ENCODE measurements at regions of chr13 and their contacts with region 1.

Region 1: GRCh38 chr13:112942689-112943308 is 26.2 kb upstream of the MCF2L start:
- DNase-seq: peak; percentile 94
- H3K4me3 Mint-ChIP-seq: peak overlapping the region; percentile 73
- H3K27ac Mint-ChIP-seq: no peak overlapping the region
- H3K4me1 Mint-ChIP-seq: peaks cover 4% of the 10 kb centered on the region
- H3K27me3 Mint-ChIP-seq: peaks cover 34% of the 10 kb centered on the region

Region 2: DNA sequence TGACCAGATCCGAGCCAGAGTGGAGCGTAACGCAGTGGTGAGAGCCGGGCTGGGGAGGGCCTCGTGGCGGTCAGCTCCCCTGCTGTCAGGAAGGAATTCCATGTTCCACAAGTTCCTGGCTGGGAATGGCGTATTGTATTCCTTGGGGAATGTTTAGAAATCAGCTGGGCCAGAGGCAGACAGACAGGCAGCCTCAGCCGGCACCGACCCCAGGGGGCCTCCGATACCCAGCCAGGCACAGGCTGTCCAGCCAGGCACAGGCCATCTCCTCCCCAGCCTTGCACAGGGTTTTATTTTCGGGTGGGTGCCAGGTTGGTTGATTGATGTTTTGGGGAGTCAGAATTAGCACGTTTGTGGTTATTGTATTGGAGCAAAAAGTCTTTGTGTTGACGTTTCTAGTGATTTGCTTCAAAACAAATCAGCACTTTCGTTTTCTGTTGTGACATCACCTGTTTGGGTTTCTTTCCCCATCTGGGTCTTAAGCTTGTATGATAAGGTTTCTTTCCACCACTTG is 100.4 kb before region 1 on chr13:
- CTCF ChIA-PET with region 1: no interaction called
- POLR2A ChIA-PET with region 1: no interaction called
- DNase-seq: no peak
- H3K4me3 Mint-ChIP-seq: no peak overlapping the region
- H3K27ac Mint-ChIP-seq: no peak overlapping the region
- H3K4me1 Mint-ChIP-seq: peaks cover 5% of the 10 kb centered on the region
- H3K27me3 Mint-ChIP-seq: no peaks in the 10 kb centered on the region

Region 3: DNA sequence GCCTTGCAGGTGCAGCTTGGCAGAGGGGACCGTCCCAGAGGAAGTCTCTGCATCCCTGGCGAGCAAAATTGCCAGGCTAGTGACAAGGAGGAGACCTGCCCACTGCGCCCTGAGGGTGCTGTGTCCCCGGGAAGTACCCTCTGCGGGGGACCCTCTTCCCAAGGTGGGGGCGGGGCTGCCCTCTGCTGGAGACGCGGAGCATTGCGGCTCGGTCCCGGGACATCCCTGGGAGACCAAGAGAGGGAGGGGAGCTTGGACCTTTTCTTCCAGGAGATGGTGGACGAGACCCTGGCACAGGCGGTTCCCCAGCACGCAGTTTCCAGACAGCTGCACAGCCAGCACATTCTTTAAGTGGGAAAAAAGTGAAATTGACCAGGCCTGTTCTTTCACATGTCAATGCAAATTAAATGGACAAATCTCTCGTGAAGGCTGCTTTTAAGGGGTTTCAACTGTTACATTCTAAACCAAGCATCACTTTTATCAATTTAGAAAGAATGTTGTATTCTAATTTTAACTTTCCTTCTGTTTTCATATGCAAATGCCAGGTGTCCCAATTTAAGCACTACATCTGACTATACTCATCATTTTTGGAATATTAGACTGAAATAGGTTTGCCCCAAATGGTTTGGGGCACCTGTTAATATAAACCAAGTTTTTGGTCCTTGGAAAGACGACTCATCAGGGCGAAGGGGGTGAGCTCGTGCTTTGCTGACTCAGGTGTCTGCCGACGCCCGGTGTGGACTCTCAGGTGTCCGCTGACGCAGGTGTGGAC is 86.9 kb after region 1 on chr13:
- CTCF ChIA-PET with region 1: interaction called, 15 read pairs
- POLR2A ChIA-PET with region 1: no interaction called
- DNase-seq: peak; percentile 40
- H3K4me3 Mint-ChIP-seq: no peak overlapping the region
- H3K27ac Mint-ChIP-seq: no peak overlapping the region
- H3K4me1 Mint-ChIP-seq: no peaks in the 10 kb centered on the region
- H3K27me3 Mint-ChIP-seq: no peaks in the 10 kb centered on the region

Region 4: GRCh38 chr13:113238536-113238935 is 295.7 kb after region 1 on chr13:
- CTCF ChIA-PET with region 1: interaction called, 11 read pairs
- POLR2A ChIA-PET with region 1: interaction called, 3 read pairs
- DNase-seq: no peak
- H3K4me3 Mint-ChIP-seq: no peak overlapping the region
- H3K27ac Mint-ChIP-seq: no peak overlapping the region
- H3K4me1 Mint-ChIP-seq: no peaks in the 10 kb centered on the region
- H3K27me3 Mint-ChIP-seq: no peaks in the 10 kb centered on the region

Region 5: GRCh38 chr13:113393563-113394338 is 451.0 kb after region 1 on chr13:
- CTCF ChIA-PET with region 1: interaction called, 35 read pairs
- POLR2A ChIA-PET with region 1: no interaction called
- DNase-seq: peak; percentile 86
- H3K4me3 Mint-ChIP-seq: peak overlapping the region; percentile 81
- H3K27ac Mint-ChIP-seq: peak overlapping the region; percentile 68
- H3K4me1 Mint-ChIP-seq: peaks cover 6% of the 10 kb centered on the region
- H3K27me3 Mint-ChIP-seq: peaks cover 2% of the 10 kb centered on the region